ENCODE measurements at regions of chr6 and their contacts with region 1.

Region 1: DNA sequence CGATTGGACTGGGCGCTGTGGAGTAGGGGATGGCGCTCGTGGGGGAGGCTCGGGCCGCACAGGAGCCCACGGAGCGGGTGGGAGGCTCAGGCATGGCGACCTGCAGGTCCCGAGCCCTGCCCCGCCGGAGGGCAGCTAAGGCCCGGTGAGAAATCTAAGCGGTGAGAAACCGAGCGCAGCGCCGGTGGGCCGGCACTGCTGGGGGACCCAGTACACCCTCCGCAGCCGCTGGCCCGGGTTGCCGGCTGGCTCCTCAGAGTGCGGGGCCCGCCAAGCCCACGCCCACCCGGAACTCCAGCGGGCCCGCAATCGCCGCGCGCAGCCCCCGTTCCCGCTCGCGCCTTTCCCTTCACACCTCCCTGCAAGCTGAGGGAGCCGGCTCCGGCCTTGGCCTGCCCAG is 59.7 kb upstream of the MYLIP start:
- DNase-seq: no peak
- CTCF ChIP-seq: no peak

Region 2: GRCh38 chr6:16639684-16640480 is 570.7 kb after region 1 on chr6:
- CTCF ChIA-PET with region 1: no interaction called
- POLR2A ChIA-PET with region 1: interaction called, 10 read pairs
- DNase-seq: no peak
- CTCF ChIP-seq: no peak